K562 (cell line): ENCODE measurements at regions of chr12 and their contacts with region 1.

Region 1: DNA sequence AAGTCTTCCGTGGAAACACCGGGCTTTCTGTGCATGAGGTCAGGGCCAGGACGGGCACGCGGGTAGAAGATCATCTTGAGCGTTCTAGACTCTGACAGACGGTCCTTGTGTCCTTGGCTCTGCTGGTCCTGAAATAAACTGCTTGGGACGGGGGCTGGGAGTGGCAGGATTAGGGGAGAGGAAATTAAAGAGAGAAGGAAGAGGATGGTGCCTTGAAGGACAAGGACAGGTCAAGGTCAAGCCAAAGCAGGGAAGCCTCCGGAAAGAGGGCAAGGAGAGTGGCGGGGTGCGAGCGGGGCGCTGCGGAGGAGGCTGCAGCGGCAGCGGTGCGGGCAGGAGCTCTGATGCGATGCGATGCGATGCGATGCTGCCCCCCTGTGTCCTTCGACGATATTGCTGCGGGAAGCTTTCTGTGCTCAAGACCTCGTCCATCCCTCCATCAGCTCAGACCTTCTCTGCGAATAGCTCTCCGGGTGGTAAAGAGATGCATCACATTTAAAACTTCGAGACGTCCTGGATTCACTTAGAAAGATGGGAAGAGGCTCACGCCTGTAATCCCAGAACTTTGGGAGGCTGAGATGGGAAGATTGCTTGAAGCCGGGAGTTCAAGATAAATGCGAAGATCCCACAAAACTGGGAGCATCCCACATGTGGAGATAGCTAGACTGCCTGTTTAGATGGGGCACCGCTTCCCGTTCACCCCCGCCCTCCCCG is 110.1 kb upstream of the TMEM132D start:
- DNase-seq: peak; percentile 70 to 76 (median 72)
- ATAC-seq: peak; percentile 98
- H3K4me3 ChIP-seq: no peak overlapping the region
- H3K27ac ChIP-seq: no peak overlapping the region
- H3K4me1 ChIP-seq: no peaks in the 10 kb centered on the region
- H3K27me3 ChIP-seq: peaks cover 20 to 60% of the 10 kb centered on the region in 2 experiments; a peak in 4 of 5 replicates
- CTCF ChIP-seq: peak; percentile 70 to 78 (median 70); a peak in 5 of 6 replicates
- EP300 ChIP-seq: no peak
- POLR2A ChIP-seq: no peak
- RAD21 ChIP-seq: peak; percentile 38 to 73

Region 2: DNA sequence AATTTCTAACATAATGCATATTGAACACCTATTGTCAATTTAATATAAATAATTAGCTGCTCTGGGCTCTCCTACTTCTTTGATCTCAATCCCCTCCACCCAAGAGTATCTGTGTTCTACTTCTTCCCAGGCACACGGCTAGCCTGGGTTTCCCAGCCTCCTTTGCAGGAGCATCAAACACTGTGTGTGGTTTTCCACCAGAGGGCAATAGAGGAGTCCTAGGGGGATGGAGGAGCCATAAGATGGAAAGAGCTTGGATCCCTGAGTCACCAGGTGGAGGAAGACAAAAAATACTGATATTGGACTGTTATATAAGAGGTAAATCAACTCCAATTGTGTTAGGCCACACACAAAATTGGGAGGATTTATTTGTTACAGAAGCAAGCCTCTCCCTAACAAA is 827.0 kb before region 1 on chr12:
- CTCF ChIA-PET with region 1: no interaction called
- POLR2A ChIA-PET with region 1: no interaction called
- in situ Hi-C with region 1: no loop called
- intact Hi-C with region 1: loop called (anchors 10 kb)
- DNase-seq: peak in 2 of 4 experiments; percentile 19 to 35
- ATAC-seq: peak; percentile 83
- H3K4me3 ChIP-seq: no peak overlapping the region
- H3K27ac ChIP-seq: no peak overlapping the region
- H3K4me1 ChIP-seq: no peaks in the 10 kb centered on the region
- H3K27me3 ChIP-seq: peaks cover 0 to 8% of the 10 kb centered on the region in 2 experiments; a peak in 2 of 5 replicates
- CTCF ChIP-seq: peak; percentile 35 to 41 (median 40); a peak in 4 of 6 replicates
- EP300 ChIP-seq: no peak
- POLR2A ChIP-seq: no peak
- RAD21 ChIP-seq: no peak

Region 3: DNA sequence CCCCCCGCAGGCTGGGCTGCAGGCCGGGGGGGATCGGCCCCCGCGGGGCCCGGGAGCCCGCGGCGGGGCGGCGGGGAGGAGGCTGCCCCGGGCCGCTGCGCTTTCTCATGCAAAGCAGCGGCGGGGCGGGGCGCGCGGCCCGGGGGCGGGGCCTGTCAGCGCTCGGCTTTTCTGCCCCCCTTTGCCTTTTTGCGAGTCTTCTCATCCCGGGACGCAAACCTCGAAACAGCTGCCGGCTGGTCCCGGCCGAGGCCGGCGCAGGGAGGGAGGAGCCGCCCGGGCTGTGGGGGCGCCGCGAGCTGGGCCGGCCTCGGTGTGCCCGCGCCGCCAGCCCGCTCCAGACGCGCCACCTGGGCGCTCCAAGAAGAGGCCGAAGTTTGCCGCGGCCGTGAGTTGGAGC is 148.3 kb after region 1 on chr12 and contains the start of gene FZD10:
- CTCF ChIA-PET with region 1: no interaction called
- POLR2A ChIA-PET with region 1: no interaction called
- in situ Hi-C with region 1: no loop called
- intact Hi-C with region 1: no loop called
- DNase-seq: no peak
- ATAC-seq: no peak
- H3K4me3 ChIP-seq: no peak within 1 kb of the TSS
- H3K27ac ChIP-seq: no peak within 1 kb of the TSS
- H3K4me1 ChIP-seq: peaks cover 0 to 7% of the 10 kb centered on the region in 2 experiments; a peak in 2 of 5 replicates
- H3K27me3 ChIP-seq: peaks cover 2 to 12% of the 10 kb centered on the region in 2 experiments; a peak in 4 of 5 replicates
- CTCF ChIP-seq: no peak
- EP300 ChIP-seq: no peak
- POLR2A ChIP-seq: no peak
- RAD21 ChIP-seq: no peak
- polyA plus RNA-seq, gene FZD10: not detected

Region 4: DNA sequence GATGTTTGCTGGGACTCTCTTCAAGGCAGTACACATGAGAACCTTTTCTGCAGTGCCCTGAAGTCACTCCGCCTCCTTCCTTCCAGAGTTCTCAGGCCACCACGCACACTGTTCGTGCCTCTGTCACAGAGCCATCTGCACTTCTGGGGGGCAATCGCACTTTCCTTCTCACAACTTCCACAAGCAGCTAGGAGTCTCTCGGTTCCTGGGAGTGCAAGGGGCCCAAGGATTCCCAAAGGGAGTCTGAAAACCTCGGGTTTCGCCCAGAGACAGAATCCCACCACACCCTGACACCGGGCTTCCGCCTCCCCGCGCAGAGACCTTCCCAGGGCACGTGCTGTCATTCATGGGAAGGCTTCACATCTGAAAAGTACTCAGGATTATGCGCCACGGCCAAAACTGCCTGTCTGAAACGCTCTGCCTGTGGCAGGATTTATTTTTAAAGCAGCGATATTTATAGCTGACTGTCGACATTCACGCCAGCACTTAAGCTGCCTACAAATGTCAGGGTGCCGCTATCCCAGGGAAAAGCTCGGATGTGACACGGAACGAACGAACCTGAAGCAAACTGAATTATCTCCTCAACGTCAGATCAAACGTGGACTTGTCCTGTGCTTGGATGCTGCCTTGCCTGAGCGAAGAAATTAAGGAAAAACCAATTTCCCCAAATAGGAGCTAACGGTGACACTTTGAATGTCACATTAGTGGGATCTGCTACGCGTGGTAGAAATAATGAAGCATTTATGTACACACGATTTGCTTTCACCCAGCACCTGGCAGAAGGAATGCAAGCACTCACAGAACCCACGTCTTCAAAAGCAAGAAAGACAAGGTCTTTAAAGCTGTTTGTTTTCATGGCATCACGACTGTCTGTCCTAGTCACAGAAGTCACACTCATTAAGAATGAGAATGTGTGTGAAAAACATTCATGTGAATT is 477.8 kb after region 1 on chr12:
- CTCF ChIA-PET with region 1: no interaction called
- POLR2A ChIA-PET with region 1: no interaction called
- in situ Hi-C with region 1: no loop called
- intact Hi-C with region 1: no loop called
- DNase-seq: no peak
- ATAC-seq: no peak
- H3K4me3 ChIP-seq: no peak overlapping the region
- H3K27ac ChIP-seq: no peak overlapping the region
- H3K4me1 ChIP-seq: no peaks in the 10 kb centered on the region; a peak in 1 of 5 replicates
- H3K27me3 ChIP-seq: peaks cover 13 to 59% of the 10 kb centered on the region in 2 experiments; a peak in 4 of 5 replicates
- CTCF ChIP-seq: no peak
- EP300 ChIP-seq: no peak
- POLR2A ChIP-seq: no peak
- RAD21 ChIP-seq: no peak